PC-9 (cell line): ENCODE measurements at regions of chr1 and their contacts with region 1.

Region 1: GRCh38 chr1:24932284-24932683 is 2.2 kb upstream of the RUNX3 start:
- DNase-seq: peak in 1 of 2 experiments; percentile 50
- H3K4me3 ChIP-seq: no peak overlapping the region
- H3K27ac ChIP-seq: no peak overlapping the region
- H3K4me1 ChIP-seq: no peaks in the 10 kb centered on the region
- H3K27me3 ChIP-seq: peaks cover 21% of the 10 kb centered on the region
- CTCF ChIP-seq: no peak; the same call in 1 of the 2 replicates

Region 2: DNA sequence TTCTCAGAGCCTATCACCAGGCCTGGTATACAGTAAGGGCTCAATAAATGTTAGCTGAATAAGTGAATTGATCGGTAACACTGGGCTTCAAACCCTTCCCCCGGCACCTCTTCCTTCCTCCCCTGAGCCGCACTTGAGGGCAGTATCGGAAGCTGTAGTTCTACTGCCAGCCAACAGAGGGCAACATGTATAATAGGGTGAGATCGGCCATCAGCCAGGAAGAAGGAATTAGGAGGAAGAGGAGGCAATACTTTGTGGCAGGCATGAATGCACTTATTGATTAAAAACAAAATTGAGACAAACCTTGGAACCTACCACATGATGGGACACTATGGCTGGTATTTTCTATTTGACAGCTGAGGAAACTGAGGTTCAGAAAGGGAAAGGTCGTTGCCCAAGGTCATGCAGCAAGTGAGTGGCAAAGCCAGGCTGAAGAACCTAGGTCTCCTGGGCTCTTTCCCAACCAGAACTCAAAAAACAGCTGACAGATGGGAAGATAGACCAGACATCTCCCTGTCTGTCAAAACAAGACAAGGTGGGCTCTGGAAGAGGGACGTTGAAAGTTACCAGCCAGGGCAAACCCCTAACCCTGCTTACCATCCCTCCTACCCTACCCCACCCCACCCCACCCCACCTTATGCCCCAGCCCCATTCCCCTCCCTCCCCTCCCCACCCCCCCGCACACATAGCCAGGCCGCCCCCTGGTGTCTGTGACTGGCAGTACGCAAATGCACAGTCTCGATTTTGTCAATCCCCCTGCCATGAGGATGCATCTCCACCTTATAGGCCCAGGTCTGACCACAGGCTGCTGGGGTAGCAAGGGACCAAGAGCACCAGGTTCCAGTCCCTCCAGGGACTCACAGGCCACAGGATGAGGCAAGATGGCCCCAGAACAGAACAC is 105.1 kb after region 1 on chr1:
- CTCF ChIA-PET with region 1: interaction called, 3 read pairs
- POLR2A ChIA-PET with region 1: no interaction called
- intact Hi-C with region 1: loop called (anchors 1 kb)
- DNase-seq: peak in 1 of 2 experiments; percentile 22
- H3K4me3 ChIP-seq: no peak overlapping the region
- H3K27ac ChIP-seq: no peak overlapping the region
- H3K4me1 ChIP-seq: no peaks in the 10 kb centered on the region
- H3K27me3 ChIP-seq: peaks cover 15% of the 10 kb centered on the region
- CTCF ChIP-seq: peak; percentile 74

Region 3: DNA sequence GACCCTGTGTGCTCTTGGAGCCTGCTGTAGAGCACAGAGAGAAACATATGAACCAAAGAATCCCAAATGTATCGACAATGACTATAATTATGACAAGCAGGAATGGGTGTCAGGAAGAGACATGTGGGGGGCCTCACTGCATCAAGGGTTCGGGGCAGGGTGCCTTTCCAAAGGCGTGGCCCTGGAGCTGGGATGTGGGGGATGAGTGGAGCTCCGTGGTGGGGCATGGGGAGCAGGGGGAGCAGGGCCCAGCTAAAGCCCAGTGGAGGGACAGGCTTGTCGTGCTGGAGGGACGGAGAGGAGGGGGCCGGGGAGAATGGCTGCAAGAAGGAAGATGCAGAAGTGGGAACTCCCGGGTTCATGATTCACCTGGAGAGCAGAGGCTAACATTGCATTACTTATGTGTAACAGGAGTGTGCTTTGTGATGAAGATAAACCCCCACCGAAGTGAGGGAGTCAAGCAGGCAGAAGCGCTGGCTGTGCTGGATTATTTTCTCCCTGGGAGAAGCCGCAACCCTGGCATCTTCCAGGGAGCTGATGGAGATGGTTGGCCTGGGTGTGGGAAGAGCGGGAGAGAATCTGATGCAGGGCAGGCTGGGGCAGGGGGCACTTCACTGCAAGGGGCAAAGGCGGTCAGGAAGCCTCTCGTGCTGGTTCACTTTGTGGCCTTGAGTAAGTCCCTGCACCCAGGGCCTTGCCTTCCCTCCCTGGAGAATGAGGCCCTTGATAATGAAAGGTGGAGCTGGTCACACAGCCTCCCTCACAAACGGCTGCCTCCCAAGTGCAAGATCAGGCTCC is 122.4 kb after region 1 on chr1:
- CTCF ChIA-PET with region 1: no interaction called
- POLR2A ChIA-PET with region 1: no interaction called
- intact Hi-C with region 1: no loop called
- DNase-seq: no peak
- H3K4me3 ChIP-seq: no peak overlapping the region
- H3K27ac ChIP-seq: no peak overlapping the region
- H3K4me1 ChIP-seq: no peaks in the 10 kb centered on the region
- H3K27me3 ChIP-seq: peaks cover 39% of the 10 kb centered on the region
- CTCF ChIP-seq: no peak

Region 4: DNA sequence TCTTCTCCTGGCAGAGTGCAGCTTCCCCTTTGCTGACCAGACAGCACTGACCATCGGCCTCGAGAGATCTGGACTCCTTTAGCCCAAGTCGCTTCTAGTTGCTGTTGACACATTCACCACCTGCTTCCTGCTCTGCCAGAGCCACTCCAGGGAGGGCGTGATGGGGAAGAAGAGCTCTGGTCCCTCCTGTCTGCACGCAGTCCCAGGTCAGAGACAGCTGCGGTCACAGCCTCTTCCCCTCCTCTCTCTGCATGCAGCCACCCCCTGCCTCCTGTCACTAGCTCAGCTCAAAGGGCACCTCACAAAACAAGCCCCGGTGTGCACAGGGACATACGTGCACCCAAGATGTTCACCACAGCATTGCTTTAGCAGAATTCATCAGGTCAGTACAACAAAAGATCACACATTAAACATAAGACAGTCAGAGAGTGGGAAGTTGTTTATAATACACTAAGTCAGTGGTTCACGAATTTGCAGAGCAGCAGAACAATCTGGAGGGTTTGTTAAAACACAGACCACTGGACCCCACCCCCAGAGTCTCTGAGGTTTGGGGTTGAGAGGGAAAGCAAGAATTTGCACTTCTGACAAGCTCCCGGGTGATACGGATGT is 167.2 kb after region 1 on chr1:
- CTCF ChIA-PET with region 1: no interaction called
- POLR2A ChIA-PET with region 1: no interaction called
- intact Hi-C with region 1: loop called (anchors 2 kb)
- DNase-seq: no peak
- H3K4me3 ChIP-seq: no peak overlapping the region
- H3K27ac ChIP-seq: no peak overlapping the region
- H3K4me1 ChIP-seq: peaks cover 6% of the 10 kb centered on the region
- H3K27me3 ChIP-seq: peaks cover 5% of the 10 kb centered on the region; the same call in 1 of the 2 replicates
- CTCF ChIP-seq: no peak